ENCODE measurements at regions of chr1 and their contacts with region 1.

Region 1: GRCh38 chr1:66929999-66930822 is 5.4 kb downstream of the MIER1 start:
- DNase-seq: peak; percentile 89
- ATAC-seq: peak; percentile 73
- H3K4me3 ChIP-seq: peak overlapping the region; percentile 65
- H3K27ac ChIP-seq: peak overlapping the region; percentile 77
- H3K4me1 ChIP-seq: 0 out of 2 replicates have a peak, but pooled peaks cover 2% of the 10 kb centered on the region
- H3K27me3 ChIP-seq: no peaks in the 10 kb centered on the region
- CTCF ChIP-seq: peak; percentile 38
- POLR2A ChIP-seq: peak; percentile 74
- RAD21 ChIP-seq: no peak

Region 2: DNA sequence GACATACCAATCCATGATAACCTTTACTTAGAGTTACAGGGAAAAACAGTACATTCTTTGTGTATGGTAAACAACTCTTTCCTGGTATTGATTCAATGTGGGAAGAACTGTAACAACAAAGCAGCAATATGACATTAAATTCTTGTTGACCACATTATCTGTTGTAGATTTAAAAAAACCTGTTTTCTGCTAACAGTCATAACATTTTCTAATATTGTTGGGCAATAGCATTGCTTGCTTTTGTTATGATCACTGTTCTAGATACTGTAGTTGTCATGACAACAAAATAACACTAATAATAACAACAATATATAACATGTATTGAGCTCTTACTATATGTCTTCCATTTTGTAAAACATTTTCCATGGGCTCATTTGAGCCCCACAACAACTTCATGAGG is 1083.3 kb before region 1 on chr1:
- CTCF ChIA-PET with region 1: no interaction called
- POLR2A ChIA-PET with region 1: no interaction called
- dilution Hi-C with region 1: no loop called
- in situ Hi-C with region 1: no loop called
- intact Hi-C with region 1: loop called (anchors 10 kb)
- DNase-seq: no peak
- ATAC-seq: no peak
- H3K4me3 ChIP-seq: no peak overlapping the region
- H3K27ac ChIP-seq: no peak overlapping the region
- H3K4me1 ChIP-seq: peaks cover 2% of the 10 kb centered on the region; the same call in 1 of the 2 replicates
- H3K27me3 ChIP-seq: no peaks in the 10 kb centered on the region
- CTCF ChIP-seq: no peak
- POLR2A ChIP-seq: no peak
- RAD21 ChIP-seq: no peak

Region 3: GRCh38 chr1:66968574-66968973 is 38.4 kb after region 1 on chr1:
- CTCF ChIA-PET with region 1: no interaction called
- POLR2A ChIA-PET with region 1: no interaction called
- dilution Hi-C with region 1: no loop called
- in situ Hi-C with region 1: no loop called
- intact Hi-C with region 1: loop called (anchors 5 kb)
- DNase-seq: peak; percentile 28
- ATAC-seq: peak; percentile 78
- H3K4me3 ChIP-seq: no peak overlapping the region
- H3K27ac ChIP-seq: no peak overlapping the region
- H3K4me1 ChIP-seq: peaks cover 5% of the 10 kb centered on the region; the same call in 1 of the 2 replicates
- H3K27me3 ChIP-seq: no peaks in the 10 kb centered on the region
- CTCF ChIP-seq: no peak
- POLR2A ChIP-seq: no peak
- RAD21 ChIP-seq: no peak

Measured in IMR-90 (cell line).